Naive thymus-derived CD4-positive, alpha-beta T cell (primary cell): ENCODE measurements at regions of chr1 and their contacts with region 1.

Region 1: GRCh38 chr1:159214149-159214760 is 9.6 kb downstream of the ACKR1 start:
- DNase-seq: peak in 5 of 9 donors; percentile 1 to 40 (median 21)
- ATAC-seq: peak; percentile 58
- H3K4me3 ChIP-seq: no peak overlapping the region
- H3K4me3 Mint-ChIP-seq: no peak overlapping the region
- H3K27ac ChIP-seq: no peak overlapping the region
- H3K27ac Mint-ChIP-seq: no peak overlapping the region
- H3K4me1 ChIP-seq: no peaks in the 10 kb centered on the region
- H3K4me1 Mint-ChIP-seq: peaks cover 0 to 3% (median 0%) of the 10 kb centered on the region in 7 donors
- H3K27me3 ChIP-seq: no peaks in the 10 kb centered on the region
- H3K27me3 Mint-ChIP-seq: peaks cover 23 to 71% (median 37%) of the 10 kb centered on the region in 5 donors

Region 2: DNA sequence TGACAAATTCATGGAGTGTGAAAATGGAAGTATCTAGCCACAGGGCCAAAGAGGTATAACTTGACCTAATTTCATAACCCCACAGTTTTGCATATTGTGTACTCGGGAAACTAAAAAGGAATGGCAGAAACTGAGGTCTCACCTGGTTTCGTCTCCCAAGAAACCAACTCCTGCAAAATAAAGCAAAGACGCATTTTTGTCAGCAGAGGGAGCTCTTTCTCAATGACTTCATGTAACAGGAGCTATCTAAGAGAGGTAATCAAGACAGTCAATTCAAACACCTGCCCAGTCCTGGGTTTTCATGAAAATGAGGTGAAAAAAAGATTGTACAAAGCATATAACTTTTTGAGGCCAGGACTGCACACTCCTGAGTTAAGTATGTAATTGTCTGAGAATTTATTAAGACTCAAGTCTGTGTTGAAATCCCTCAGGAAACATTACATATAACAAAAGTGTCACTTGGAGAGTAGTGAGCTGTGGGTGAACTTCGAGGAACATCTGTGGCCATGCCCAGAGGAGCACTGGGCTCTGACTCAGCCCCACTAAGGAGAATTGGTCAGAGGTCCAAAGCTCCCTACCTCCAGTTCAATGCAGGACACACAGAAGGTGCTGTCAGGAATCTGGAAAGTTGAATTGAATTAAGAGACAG is 1634.0 kb before region 1 on chr1:
- CTCF ChIA-PET with region 1: no interaction called
- POLR2A ChIA-PET with region 1: no interaction called
- intact Hi-C with region 1: loop called in 1 of 2 experiments (anchors 5 kb)
- DNase-seq: peak in 5 of 9 donors; percentile 22 to 45 (median 30)
- ATAC-seq: no peak
- H3K4me3 ChIP-seq: no peak overlapping the region
- H3K4me3 Mint-ChIP-seq: no peak overlapping the region
- H3K27ac ChIP-seq: no peak overlapping the region
- H3K27ac Mint-ChIP-seq: no peak overlapping the region
- H3K4me1 ChIP-seq: no peaks in the 10 kb centered on the region
- H3K4me1 Mint-ChIP-seq: no peaks in the 10 kb centered on the region
- H3K27me3 ChIP-seq: no peaks in the 10 kb centered on the region
- H3K27me3 Mint-ChIP-seq: peaks cover under 1 to 20% (median 16%) of the 10 kb centered on the region in 5 donors

Region 3: GRCh38 chr1:157963713-157964112 is 1250.5 kb before region 1 on chr1:
- CTCF ChIA-PET with region 1: no interaction called
- POLR2A ChIA-PET with region 1: no interaction called
- intact Hi-C with region 1: loop called in 1 of 2 experiments (anchors 5 kb)
- DNase-seq: peak in 7 of 9 donors; percentile 30 to 55 (median 41)
- ATAC-seq: peak; percentile 51
- H3K4me3 ChIP-seq: no peak overlapping the region
- H3K4me3 Mint-ChIP-seq: peak overlapping the region in 1 of 10 donors; percentile 59
- H3K27ac ChIP-seq: no peak overlapping the region
- H3K27ac Mint-ChIP-seq: no peak overlapping the region
- H3K4me1 ChIP-seq: no peaks in the 10 kb centered on the region
- H3K4me1 Mint-ChIP-seq: no peaks in the 10 kb centered on the region
- H3K27me3 ChIP-seq: no peaks in the 10 kb centered on the region
- H3K27me3 Mint-ChIP-seq: peaks cover 2 to 55% (median 24%) of the 10 kb centered on the region in 5 donors

Region 4: GRCh38 chr1:159132271-159132881 is 81.9 kb before region 1 on chr1:
- CTCF ChIA-PET with region 1: interaction called, 4 read pairs
- POLR2A ChIA-PET with region 1: no interaction called
- intact Hi-C with region 1: loop called (anchors 1 kb)
- DNase-seq: peak in 8 of 9 donors; percentile 19 to 68 (median 45)
- ATAC-seq: peak; percentile 67
- H3K4me3 ChIP-seq: no peak overlapping the region
- H3K4me3 Mint-ChIP-seq: no peak overlapping the region
- H3K27ac ChIP-seq: no peak overlapping the region
- H3K27ac Mint-ChIP-seq: no peak overlapping the region
- H3K4me1 ChIP-seq: no peaks in the 10 kb centered on the region
- H3K4me1 Mint-ChIP-seq: no peaks in the 10 kb centered on the region
- H3K27me3 ChIP-seq: no peaks in the 10 kb centered on the region
- H3K27me3 Mint-ChIP-seq: peaks cover 0 to 13% (median 9%) of the 10 kb centered on the region in 5 donors

Region 5: DNA sequence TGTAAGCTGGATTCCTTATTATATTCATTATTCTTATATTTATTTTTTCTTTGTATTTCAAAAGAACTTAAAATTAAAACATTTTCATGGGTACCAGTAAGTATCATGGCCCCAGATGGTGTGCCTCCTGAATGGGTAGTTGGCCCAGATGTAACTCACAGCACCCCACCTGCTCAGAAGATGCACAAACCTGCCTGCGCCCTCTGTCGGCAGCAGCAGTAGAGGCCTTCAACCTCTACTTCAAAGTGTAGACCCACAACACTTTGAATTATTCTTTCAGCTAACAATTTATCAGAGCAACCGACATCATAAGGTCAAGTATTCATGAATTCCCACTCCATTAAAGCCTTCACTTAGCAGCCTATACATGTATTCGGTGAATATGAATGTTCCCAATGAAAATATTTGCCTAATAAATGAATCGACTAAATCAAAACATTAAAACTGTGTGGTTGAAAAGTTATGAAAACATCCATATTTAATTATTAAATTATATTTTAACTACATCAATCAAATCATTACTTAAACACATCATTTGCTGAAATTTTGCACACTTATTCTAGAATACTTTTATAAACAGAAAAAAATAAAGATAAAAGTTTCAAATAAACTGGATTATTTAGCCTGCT is 792.2 kb after region 1 on chr1:
- CTCF ChIA-PET with region 1: no interaction called
- POLR2A ChIA-PET with region 1: no interaction called
- intact Hi-C with region 1: loop called (anchors 2 to 5 kb)
- DNase-seq: peak; percentile 38 to 67 (median 61)
- ATAC-seq: peak; percentile 88
- H3K4me3 ChIP-seq: no peak overlapping the region
- H3K4me3 Mint-ChIP-seq: no peak overlapping the region
- H3K27ac ChIP-seq: no peak overlapping the region
- H3K27ac Mint-ChIP-seq: no peak overlapping the region
- H3K4me1 ChIP-seq: no peaks in the 10 kb centered on the region
- H3K4me1 Mint-ChIP-seq: no peaks in the 10 kb centered on the region
- H3K27me3 ChIP-seq: no peaks in the 10 kb centered on the region
- H3K27me3 Mint-ChIP-seq: peaks cover 0 to 33% (median 6%) of the 10 kb centered on the region in 5 donors